BJ (cell line): ENCODE measurements at regions of chr18 and their contacts with region 1.

Region 1: DNA sequence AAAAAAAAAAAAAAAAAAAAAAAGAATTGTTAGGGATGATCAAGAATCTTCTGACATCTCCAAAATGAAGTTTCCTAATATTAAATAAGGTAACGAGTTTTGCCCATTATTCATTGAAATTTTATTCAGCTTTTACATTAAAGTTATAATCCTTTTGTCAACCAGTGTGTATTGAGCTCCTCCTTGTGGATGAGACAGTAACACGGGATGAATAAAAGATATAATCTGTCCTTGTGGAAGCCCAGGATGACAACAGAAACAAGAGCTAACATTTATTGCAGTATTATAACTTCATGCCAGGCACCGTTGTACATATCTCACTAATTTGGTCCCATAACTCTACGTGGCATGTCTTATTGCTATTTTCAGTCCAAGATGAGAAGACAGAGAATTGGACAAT is 33.4 kb upstream of the SERPINB7 start:
- DNase-seq: no peak
- H3K4me3 ChIP-seq: no peak overlapping the region
- H3K27me3 ChIP-seq: no peaks in the 10 kb centered on the region
- CTCF ChIP-seq: peak; percentile 63

Region 2: GRCh38 chr18:63505566-63506335 is 236.0 kb before region 1 on chr18:
- CTCF ChIA-PET with region 1: interaction called, 21 read pairs
- POLR2A ChIA-PET with region 1: no interaction called
- DNase-seq: no peak
- H3K4me3 ChIP-seq: no peak overlapping the region
- H3K27me3 ChIP-seq: no peaks in the 10 kb centered on the region; the same call in 1 of the 2 replicates
- CTCF ChIP-seq: peak; percentile 67

Region 3: GRCh38 chr18:63539904-63540510 is 201.8 kb before region 1 on chr18:
- CTCF ChIA-PET with region 1: interaction called, 11 read pairs
- POLR2A ChIA-PET with region 1: no interaction called
- DNase-seq: peak; percentile 26
- H3K4me3 ChIP-seq: no peak overlapping the region
- H3K27me3 ChIP-seq: no peaks in the 10 kb centered on the region
- CTCF ChIP-seq: no peak

Region 4: GRCh38 chr18:63725682-63726480 is 15.9 kb before region 1 on chr18:
- CTCF ChIA-PET with region 1: interaction called, 8 read pairs
- POLR2A ChIA-PET with region 1: interaction called, 10 read pairs
- DNase-seq: no peak
- H3K4me3 ChIP-seq: no peak overlapping the region
- H3K27me3 ChIP-seq: no peaks in the 10 kb centered on the region
- CTCF ChIP-seq: no peak

Region 5: DNA sequence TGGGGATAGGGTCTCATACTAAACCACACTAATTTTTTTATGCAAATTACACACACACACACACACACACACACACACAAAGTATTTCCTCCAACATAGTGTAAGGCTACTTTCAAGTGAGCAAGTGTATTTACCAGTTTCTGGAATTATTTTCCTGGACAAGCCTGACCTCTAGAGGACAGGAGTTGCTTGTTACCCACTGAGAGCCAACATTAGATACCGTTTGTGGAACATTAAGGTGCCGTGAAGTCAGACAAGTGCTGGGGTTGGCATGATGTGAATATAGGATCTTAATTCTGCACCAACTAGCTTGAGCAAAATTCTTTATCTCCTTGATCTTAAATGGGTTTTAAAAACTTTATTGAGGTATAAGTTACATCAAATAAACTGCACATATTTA is 106.4 kb after region 1 on chr18:
- CTCF ChIA-PET with region 1: interaction called, 72 read pairs
- POLR2A ChIA-PET with region 1: no interaction called
- DNase-seq: no peak
- H3K4me3 ChIP-seq: no peak overlapping the region
- H3K27me3 ChIP-seq: no peaks in the 10 kb centered on the region
- CTCF ChIP-seq: peak; percentile 73